GM10248 (cell line): ENCODE measurements at regions of chr5 and their contacts with region 1.

Region 1: DNA sequence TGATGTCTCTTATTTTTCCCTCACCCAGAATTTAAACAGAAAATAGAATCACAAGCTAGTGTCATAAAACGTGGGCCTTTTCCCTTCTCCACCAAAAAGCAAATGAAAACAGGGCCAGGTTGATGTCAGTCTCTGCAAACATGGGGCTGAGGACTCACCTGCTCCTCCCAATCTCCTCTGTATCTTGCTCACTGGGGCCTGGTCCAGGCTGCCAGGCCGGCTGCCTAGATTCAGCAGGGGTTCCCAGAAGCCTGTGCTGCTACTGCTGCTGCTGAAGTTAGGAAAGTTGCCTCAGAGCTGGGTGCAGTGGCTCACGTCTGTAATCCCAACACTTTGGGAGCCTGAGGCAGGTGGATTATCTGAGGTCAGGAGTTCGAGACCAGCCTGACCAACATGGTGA is 84.3 kb downstream of the PCDH1 start:
- DNase-seq: no peak
- CTCF ChIP-seq: no peak

Region 2: GRCh38 chr5:141811287-141812155 is 17.6 kb after region 1 on chr5:
- CTCF ChIA-PET with region 1: interaction called, 25 read pairs
- POLR2A ChIA-PET with region 1: no interaction called
- DNase-seq: peak; percentile 72
- CTCF ChIP-seq: peak; percentile 50